ENCODE measurements at regions of chr6 and their contacts with region 1.

Region 1: GRCh38 chr6:53437557-53438202 is 88.9 kb upstream of the ELOVL5 start:
- DNase-seq: peak; percentile 36
- H3K4me3 Mint-ChIP-seq: no peak overlapping the region
- H3K27ac Mint-ChIP-seq: no peak overlapping the region
- H3K4me1 Mint-ChIP-seq: peaks cover 21% of the 10 kb centered on the region
- H3K27me3 Mint-ChIP-seq: peaks cover 7% of the 10 kb centered on the region

Region 2: DNA sequence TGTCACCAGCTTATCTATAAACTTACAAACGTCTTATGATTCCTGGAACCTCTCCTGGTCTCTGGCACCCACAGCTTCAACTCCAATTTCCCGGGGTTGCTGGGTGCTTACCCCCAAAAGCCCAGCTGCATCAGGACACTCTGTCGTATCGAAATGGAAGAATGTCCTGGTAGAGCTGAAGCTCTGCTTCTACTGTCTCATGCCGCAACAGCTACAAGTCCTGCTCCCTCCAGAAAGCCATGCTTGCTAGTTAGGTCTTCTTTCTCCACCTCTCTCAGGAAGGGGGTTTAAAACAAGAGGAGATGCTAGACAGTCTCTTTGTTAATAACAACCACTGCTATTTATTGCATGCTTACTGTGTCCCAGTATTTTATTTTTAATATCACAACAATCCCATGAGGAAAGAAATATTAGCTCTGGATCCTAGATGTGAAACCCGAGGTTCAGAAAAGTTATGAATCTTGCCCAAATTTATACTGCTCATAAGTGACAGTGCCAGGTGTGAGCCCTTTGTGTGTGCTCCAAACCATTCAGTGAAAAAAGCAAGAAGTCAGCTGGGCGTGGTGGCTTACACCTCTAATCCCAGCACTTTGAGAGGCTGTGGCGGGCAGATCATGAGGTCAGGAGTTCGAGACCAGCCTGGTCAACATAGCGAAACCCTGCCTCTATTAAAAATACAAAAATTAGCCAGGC is 206.8 kb before region 1 on chr6:
- CTCF ChIA-PET with region 1: interaction called, 3 read pairs
- POLR2A ChIA-PET with region 1: no interaction called
- intact Hi-C with region 1: loop called (anchors 1 kb)
- DNase-seq: no peak
- H3K4me3 Mint-ChIP-seq: no peak overlapping the region
- H3K27ac Mint-ChIP-seq: no peak overlapping the region
- H3K4me1 Mint-ChIP-seq: peaks cover 32% of the 10 kb centered on the region
- H3K27me3 Mint-ChIP-seq: no peaks in the 10 kb centered on the region

Region 3: GRCh38 chr6:53484476-53485280 is 47.0 kb after region 1 on chr6:
- CTCF ChIA-PET with region 1: interaction called, 4 read pairs
- POLR2A ChIA-PET with region 1: no interaction called
- intact Hi-C with region 1: loop called (anchors 2 kb)
- DNase-seq: peak; percentile 68
- H3K4me3 Mint-ChIP-seq: no peak overlapping the region
- H3K27ac Mint-ChIP-seq: no peak overlapping the region
- H3K4me1 Mint-ChIP-seq: peaks cover 9% of the 10 kb centered on the region
- H3K27me3 Mint-ChIP-seq: peaks cover 28% of the 10 kb centered on the region

Region 4: DNA sequence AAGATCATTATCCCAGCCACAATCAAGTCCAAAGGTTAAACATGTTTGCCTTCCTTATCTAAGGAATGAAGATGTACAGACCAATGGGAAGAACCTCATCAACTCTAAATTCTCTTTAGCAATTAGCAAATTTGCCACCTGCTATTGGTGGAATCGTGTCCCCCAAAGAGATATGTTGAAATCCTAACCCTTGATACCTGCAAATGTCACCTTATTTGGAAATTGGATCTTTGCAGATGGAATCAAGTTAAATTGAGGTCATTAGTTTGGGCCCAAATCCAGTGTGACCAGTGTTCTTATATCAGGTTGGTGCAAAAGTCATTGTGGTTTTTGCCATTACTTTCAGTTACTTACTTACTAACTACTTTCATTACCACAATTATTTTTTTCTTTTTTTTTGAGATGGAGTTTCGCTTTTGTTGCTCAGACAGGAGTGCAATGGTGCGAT is 196.5 kb after region 1 on chr6:
- CTCF ChIA-PET with region 1: no interaction called
- POLR2A ChIA-PET with region 1: no interaction called
- intact Hi-C with region 1: no loop called
- DNase-seq: no peak
- H3K4me3 Mint-ChIP-seq: no peak overlapping the region
- H3K27ac Mint-ChIP-seq: no peak overlapping the region
- H3K4me1 Mint-ChIP-seq: peaks cover 6% of the 10 kb centered on the region
- H3K27me3 Mint-ChIP-seq: peaks cover 3% of the 10 kb centered on the region

Measured in activated CD4-positive, alpha-beta memory T cell treated with anti-CD3 and anti-CD28 coated beads for 36 hours (primary cell).